A549 (cell line): ENCODE measurements at regions of chr11 and their contacts with region 1.

Region 1: DNA sequence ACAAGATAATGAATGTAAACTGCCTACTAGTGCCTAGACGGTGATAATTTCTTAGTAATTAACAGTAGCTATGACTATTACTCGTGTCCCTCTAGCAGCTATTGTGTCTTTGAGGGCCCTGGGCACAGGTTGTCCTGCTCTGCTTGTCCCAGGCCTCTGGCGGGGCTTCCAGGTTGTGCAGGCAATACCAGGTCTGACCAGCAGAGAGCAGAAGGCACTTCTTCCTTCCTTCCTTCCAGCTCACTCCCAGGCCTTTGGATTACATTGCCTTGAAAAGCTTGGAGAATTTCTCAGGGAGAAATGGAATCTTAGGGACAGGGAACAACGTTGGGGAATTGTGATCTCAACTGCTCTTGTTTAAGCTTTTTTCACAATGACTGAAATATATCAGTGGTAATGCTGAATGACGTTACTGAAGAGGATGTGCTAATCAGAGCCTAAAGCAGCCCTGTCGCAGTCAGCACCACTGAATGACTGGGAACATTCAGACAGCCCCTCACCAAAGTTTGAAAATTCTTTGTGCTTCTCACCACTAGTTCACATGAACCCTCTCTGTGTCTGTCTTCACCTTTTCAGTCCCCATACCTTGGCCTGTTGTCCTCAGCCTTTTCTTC is 8.4 kb upstream of the CCKBR start:
- DNase-seq: peak; percentile 74 to 82
- ATAC-seq: peak; percentile 95 to 98
- H3K4me3 ChIP-seq: no peak overlapping the region
- H3K27ac ChIP-seq: no peak overlapping the region
- H3K4me1 ChIP-seq: peaks cover 9% of the 10 kb centered on the region; the same call in 2 of the 3 replicates
- CTCF ChIP-seq: peak; percentile 60
- EP300 ChIP-seq: no peak
- POLR2A ChIP-seq: no peak
- RAD21 ChIP-seq: peak; percentile 41 to 62; a peak in 2 of 5 replicates

Region 2: DNA sequence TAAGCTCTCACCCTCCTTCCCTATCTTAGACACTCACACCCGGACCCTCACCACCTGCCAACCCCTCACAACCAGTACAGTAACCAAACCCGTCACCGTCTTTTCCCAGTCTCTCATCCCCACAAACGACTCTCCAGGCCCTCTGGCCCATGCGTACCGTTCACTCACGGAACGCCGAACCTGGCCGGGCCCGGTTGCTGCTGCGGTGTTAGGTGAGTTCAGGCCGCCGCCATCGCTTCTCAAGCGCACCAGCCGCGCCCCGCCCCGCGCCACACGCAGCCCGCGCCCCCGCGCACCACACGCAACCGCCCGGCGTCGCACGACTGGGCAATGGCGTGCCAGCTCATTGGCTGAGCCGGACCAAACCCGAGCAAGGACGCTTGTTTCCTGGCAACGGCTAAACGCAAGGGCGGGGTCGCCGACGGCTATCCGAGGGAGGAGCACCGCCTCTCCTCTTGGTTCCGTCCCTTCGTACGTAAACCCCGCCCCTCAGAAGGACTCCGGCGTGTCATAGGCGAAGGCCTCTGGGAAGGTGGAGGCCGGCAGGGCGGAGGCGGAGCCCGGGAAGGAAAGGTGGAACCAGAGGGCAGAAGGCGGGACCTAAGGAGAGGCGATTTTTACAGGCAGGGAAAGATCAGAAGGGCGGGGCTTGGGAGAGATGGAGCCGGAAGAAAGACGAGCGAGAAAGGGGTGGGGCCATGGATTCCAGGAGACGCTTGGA is 16.7 kb before region 1 on chr11 and contains the start of gene FHIP1B:
- CTCF ChIA-PET with region 1: interaction called, 33 read pairs
- POLR2A ChIA-PET with region 1: interaction called, 12 read pairs
- DNase-seq: peak; percentile 86 to 99
- ATAC-seq: peak; percentile 92 to 95
- H3K4me3 ChIP-seq: peak within 1 kb of the TSS; percentile 90
- H3K27ac ChIP-seq: peak within 1 kb of the TSS; percentile 89
- H3K4me1 ChIP-seq: peaks cover 11% of the 10 kb centered on the region; the same call in 2 of the 3 replicates
- CTCF ChIP-seq: no peak
- EP300 ChIP-seq: no peak
- POLR2A ChIP-seq: peak; percentile 80
- RAD21 ChIP-seq: no peak
- polyA plus RNA-seq, gene FHIP1B: 19.4 and 23.9 TPM in 2 replicates

Region 3: DNA sequence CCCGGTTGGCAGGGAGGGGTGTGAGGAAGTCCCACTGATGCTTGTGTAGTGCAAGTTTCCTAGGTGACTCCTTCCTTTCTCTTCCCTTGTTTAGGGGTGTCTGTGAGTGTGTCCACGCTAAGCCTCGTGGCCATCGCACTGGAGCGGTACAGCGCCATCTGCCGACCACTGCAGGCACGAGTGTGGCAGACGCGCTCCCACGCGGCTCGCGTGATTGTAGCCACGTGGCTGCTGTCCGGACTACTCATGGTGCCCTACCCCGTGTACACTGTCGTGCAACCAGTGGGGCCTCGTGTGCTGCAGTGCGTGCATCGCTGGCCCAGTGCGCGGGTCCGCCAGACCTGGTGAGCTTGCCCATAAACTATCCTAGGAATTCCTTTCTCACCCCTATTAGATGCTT is 18.8 kb after region 1 on chr11:
- CTCF ChIA-PET with region 1: interaction called, 11 read pairs
- POLR2A ChIA-PET with region 1: no interaction called
- DNase-seq: peak in 1 of 2 experiments; percentile 22
- ATAC-seq: peak in 1 of 2 experiments; percentile 73; a peak in 3 of 6 replicates
- H3K4me3 ChIP-seq: no peak overlapping the region
- H3K27ac ChIP-seq: no peak overlapping the region
- H3K4me1 ChIP-seq: no peaks in the 10 kb centered on the region
- CTCF ChIP-seq: no peak
- EP300 ChIP-seq: no peak
- POLR2A ChIP-seq: no peak
- RAD21 ChIP-seq: 0 out of 5 replicates have a peak, but pooled peaks of 1 of the 2 experiments have one; percentile 7

Region 4: GRCh38 chr11:6315811-6316425 is 64.7 kb after region 1 on chr11:
- CTCF ChIA-PET with region 1: interaction called, 49 read pairs
- POLR2A ChIA-PET with region 1: interaction called, 5 read pairs
- DNase-seq: peak; percentile 58 to 82
- ATAC-seq: peak; percentile 62 to 75
- H3K4me3 ChIP-seq: no peak overlapping the region
- H3K27ac ChIP-seq: no peak overlapping the region
- H3K4me1 ChIP-seq: peaks cover 5% of the 10 kb centered on the region; the same call in 2 of the 3 replicates
- CTCF ChIP-seq: peak; percentile 65
- EP300 ChIP-seq: no peak
- POLR2A ChIP-seq: no peak
- RAD21 ChIP-seq: peak; percentile 69 to 74